ENCODE measurements at regions of chr1 and their contacts with region 1.

Region 1: GRCh38 chr1:117077267-117077666 is 17.1 kb downstream of the TTF2 start:
- DNase-seq: peak; percentile 78
- ATAC-seq: peak; percentile 99
- H3K4me3 Mint-ChIP-seq: no peak overlapping the region
- H3K27ac Mint-ChIP-seq: peak overlapping the region; percentile 86
- H3K4me1 Mint-ChIP-seq: peaks cover 40% of the 10 kb centered on the region
- H3K27me3 Mint-ChIP-seq: no peaks in the 10 kb centered on the region

Region 2: DNA sequence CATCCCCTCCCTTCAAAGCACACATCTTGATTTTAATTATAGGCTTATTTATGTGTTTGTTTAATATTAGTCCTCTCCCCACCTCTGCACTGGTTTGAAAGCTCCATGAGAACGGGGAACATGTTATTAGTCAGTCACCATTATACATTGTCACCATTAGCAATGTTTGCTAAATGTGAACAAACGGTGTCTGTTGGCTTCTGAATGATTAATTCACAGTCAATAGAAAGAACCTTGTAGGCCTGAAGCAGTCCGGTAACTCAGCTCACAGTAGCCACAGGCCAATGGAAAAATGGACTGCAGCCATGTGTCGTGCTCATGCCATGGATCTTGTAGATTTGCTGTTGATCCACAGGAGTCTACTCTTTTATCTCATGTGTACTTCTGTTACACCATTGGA is 1186.7 kb before region 1 on chr1:
- CTCF ChIA-PET with region 1: no interaction called
- POLR2A ChIA-PET with region 1: no interaction called
- intact Hi-C with region 1: no loop called
- DNase-seq: no peak
- ATAC-seq: no peak
- H3K4me3 Mint-ChIP-seq: no peak overlapping the region
- H3K27ac Mint-ChIP-seq: no peak overlapping the region
- H3K4me1 Mint-ChIP-seq: no peaks in the 10 kb centered on the region
- H3K27me3 Mint-ChIP-seq: peaks cover 3% of the 10 kb centered on the region

Region 3: DNA sequence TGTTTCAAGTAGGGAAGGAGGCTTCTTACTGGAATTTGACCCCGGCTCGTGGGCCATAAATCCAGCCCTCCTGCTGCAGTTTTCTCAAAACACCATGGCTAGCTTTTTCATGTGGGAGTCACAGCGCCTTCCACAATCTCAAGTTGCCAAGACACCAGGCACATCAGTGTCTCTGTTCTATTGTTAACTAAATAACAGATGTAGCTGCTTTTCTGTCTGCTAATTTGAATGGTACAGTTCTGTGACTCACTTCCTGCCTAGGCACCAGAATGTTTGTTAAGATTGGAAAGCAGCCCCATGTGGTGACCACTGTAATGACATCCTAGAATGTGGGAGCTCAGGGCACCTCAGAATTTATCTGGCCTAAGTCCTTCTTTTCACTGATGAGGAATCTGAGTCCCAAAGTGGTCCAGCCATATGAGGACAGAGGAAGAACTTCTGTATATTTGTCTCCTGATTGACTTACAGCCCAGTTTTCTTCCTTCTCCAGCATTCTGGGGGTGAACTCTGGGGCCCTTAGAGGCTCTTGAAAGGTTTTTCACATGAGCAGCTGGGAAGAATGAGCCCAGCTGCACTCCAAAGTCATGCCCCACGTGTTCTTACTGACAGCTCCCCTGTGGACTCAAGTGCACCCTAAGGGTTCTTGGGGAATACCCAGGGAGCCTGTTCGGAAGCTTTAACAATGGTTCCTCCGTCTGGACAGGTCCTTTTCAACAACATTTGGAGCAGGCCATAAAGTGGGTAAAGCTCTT is 16.8 kb after region 1 on chr1:
- CTCF ChIA-PET with region 1: interaction called, 89 read pairs
- POLR2A ChIA-PET with region 1: interaction called, 8 read pairs
- intact Hi-C with region 1: loop called in 1 of 2 experiments (anchors 2 kb)
- DNase-seq: peak; percentile 60
- ATAC-seq: peak; percentile 85
- H3K4me3 Mint-ChIP-seq: no peak overlapping the region
- H3K27ac Mint-ChIP-seq: no peak overlapping the region
- H3K4me1 Mint-ChIP-seq: peaks cover 19% of the 10 kb centered on the region
- H3K27me3 Mint-ChIP-seq: no peaks in the 10 kb centered on the region

Region 4: DNA sequence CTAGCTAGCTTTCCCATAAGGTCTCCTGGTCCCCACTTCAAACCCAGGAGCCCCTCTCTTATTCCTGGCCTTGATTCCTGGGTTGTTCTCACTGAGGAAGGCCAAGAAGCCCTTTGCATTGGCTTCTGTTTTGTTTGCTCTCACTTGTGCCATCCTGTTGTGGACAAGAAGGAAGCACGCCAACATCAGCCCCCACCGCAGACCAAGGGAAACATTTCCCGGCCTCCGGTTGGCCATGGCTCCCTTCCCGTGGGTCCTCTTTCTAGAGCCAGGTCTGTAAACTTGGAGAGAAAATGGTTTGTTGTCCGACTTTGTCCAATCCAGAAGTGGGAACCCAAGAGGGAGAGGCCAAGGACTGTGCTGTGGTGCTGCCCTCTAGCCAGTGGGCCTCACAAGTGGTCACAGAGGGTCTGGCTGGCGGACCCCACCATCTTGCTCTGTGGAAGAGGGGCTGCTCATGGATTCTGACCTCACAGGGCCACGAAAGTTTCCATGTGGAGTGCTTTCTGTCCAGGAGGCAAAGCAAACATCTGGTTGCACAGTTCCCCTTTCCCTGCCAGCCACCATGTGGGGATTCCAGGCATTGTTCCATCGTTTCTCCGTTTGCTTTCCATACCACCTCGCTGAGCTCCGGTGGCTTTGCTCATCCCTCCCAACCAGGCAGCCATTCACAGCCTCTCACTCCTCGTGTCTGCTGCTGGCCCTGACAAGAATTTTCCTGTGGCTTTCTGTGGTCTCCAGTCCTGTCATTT is 509.7 kb after region 1 on chr1:
- CTCF ChIA-PET with region 1: no interaction called
- POLR2A ChIA-PET with region 1: no interaction called
- intact Hi-C with region 1: no loop called
- DNase-seq: no peak
- ATAC-seq: no peak
- H3K4me3 Mint-ChIP-seq: no peak overlapping the region
- H3K27ac Mint-ChIP-seq: no peak overlapping the region
- H3K4me1 Mint-ChIP-seq: no peaks in the 10 kb centered on the region
- H3K27me3 Mint-ChIP-seq: peaks cover 2% of the 10 kb centered on the region